ENCODE measurements at regions of chr12 and their contacts with region 1.

Region 1: DNA sequence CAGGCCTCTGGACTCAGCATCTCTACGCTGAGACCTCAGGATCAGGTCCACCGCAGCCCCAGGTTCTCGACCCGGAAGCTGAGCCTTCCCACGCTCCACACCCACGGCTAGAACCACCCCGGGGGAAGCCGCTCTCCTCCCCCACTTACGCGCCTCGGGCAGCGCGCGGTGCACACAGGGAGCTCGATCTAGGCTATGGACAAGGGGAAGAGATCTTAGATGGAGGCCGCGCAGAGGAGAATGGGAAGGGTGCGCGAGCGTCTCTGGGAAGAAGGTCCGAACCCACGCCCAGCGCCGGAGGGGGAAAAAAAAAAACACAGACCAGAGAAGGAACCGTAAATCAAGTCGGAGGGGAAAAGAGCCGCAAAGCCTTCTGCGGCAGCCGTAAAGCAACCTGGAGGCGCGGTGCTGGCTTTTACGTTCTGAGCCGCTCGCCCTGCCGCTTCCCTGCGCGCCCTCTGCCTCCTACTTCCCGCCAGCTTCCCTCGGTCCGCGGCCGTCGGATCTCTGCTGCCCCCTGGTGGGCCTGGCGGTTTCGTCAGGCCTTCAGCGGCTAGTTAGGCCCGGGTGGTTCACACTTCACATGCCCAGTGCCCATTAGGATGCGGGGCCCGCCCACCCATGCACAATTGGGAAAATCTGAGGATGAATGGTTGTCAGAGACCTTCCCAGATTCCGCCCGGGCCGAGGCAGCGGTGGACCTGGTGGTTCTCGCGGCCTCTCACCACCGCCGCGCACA is at the start of gene RAD52:
- DNase-seq: peak; percentile 99
- ATAC-seq: peak; percentile 96
- total RNA-seq, gene RAD52: 6.5 TPM

Region 2: GRCh38 chr12:569803-570434 is 379.7 kb before region 1 on chr12:
- intact Hi-C with region 1: loop called (anchors 5 kb)
- DNase-seq: peak; percentile 94
- ATAC-seq: peak; percentile 75

Region 3: DNA sequence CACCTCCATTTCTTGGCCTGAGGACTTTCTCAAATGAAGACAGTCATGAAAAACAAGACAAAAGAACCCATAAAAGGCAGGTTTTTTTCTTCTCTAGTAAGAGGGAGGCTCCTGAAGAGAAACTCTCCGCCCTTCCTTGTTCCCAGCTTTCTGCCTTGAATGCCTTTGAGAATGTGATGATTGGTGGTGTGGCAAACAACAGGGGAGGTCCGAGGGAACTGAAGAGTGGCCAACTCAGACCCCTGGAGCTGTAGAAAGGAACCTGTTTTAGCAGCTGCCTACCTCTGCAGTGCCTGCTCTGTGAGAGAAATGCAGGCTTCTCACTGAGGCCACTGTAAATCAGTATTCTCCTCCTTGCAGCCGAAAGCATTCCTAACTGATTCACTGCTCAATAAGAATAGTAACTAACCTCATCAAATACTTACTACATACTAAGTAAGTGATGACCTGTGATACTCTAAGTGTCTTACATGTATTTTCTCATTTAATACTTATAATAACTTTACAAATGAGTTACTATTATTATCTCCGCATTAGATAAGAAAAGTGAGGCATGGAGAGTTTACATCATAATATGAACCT is 24.8 kb after region 1 on chr12:
- intact Hi-C with region 1: loop called (anchors 2 kb)
- DNase-seq: no peak
- ATAC-seq: no peak

Measured in Right ventricle myocardium superior (tissue), 1 donor.